ENCODE measurements at regions of chr2 and their contacts with region 1.

Region 1: GRCh38 chr2:74020702-74021406 is 36.1 kb downstream of the TET3 start:
- DNase-seq: no peak
- H3K4me3 ChIP-seq: no peak overlapping the region
- H3K27ac ChIP-seq: no peak overlapping the region
- H3K4me1 ChIP-seq: no peaks in the 10 kb centered on the region
- H3K27me3 ChIP-seq: no peaks in the 10 kb centered on the region
- CTCF ChIP-seq: no peak
- POLR2A ChIP-seq: no peak

Region 2: DNA sequence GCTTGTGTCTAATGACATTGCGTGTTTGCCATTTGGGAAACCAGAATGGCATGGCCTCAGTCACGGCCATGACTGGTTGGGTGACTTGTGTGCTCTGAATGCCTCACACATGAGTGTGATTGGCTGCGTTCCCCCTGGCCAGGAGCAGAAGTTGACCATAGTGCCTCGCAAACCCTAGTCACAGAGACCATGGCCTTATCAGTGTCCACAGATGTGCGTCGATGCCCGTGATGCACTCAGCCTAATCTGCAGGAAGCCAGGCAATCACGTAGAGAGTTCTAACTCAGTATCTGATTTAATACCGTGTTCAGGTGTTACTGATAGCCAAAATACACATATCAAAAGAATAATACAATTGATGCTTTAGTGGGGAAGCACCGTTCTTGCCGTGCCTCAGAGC is 62.9 kb after region 1 on chr2:
- intact Hi-C with region 1: loop called (anchors 2 kb)
- DNase-seq: no peak
- H3K4me3 ChIP-seq: no peak overlapping the region
- H3K27ac ChIP-seq: no peak overlapping the region
- H3K4me1 ChIP-seq: no peaks in the 10 kb centered on the region
- H3K27me3 ChIP-seq: no peaks in the 10 kb centered on the region
- CTCF ChIP-seq: no peak
- POLR2A ChIP-seq: no peak

Measured in vagina (tissue), 2 donors.